ENCODE measurements at regions of chr2 and their contacts with region 1.

Region 1: GRCh38 chr2:65443509-65444201 is 11.3 kb upstream of the SPRED2 start:
- DNase-seq: no peak
- H3K4me3 ChIP-seq: no peak overlapping the region
- H3K4me3 Mint-ChIP-seq: no peak overlapping the region
- H3K27ac ChIP-seq: no peak overlapping the region
- H3K27ac Mint-ChIP-seq: no peak overlapping the region
- H3K4me1 ChIP-seq: no peaks in the 10 kb centered on the region
- H3K4me1 Mint-ChIP-seq: no peaks in the 10 kb centered on the region
- H3K27me3 ChIP-seq: no peaks in the 10 kb centered on the region
- H3K27me3 Mint-ChIP-seq: peaks cover 11 to 17% of the 10 kb centered on the region in 2 donors

Region 2: GRCh38 chr2:65562890-65563289 is 119.2 kb after region 1 on chr2:
- CTCF ChIA-PET with region 1: no interaction called
- POLR2A ChIA-PET with region 1: no interaction called
- intact Hi-C with region 1: loop called (anchors 5 kb)
- DNase-seq: no peak
- H3K4me3 ChIP-seq: no peak overlapping the region
- H3K4me3 Mint-ChIP-seq: no peak overlapping the region
- H3K27ac ChIP-seq: no peak overlapping the region
- H3K27ac Mint-ChIP-seq: no peak overlapping the region
- H3K4me1 ChIP-seq: peaks cover 5% of the 10 kb centered on the region
- H3K4me1 Mint-ChIP-seq: peaks cover 0 to 9% (median under 1%) of the 10 kb centered on the region in 4 donors
- H3K27me3 ChIP-seq: no peaks in the 10 kb centered on the region
- H3K27me3 Mint-ChIP-seq: no peaks in the 10 kb centered on the region